ENCODE measurements at regions of chr4 and their contacts with region 1.

Region 1: DNA sequence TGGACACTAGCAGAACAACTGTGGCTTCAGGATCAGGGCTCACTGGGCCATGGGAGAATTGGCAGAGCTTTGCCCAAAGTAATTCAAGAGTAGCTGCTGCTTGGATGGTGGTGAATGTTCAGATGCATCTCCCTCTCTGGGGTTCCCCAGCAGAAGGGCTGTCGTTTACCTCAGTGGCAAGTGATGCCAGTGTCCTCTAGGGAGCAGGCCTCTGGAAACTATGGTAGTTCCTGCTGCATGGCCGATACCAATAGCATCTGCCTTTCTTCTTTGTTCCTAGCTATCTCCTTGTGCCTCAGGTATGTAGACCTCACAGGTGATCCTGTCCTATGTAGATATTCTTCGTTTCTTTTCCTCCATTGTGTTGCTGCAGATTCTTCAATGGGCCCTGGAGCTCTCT is 26.4 kb downstream of the HMGB2 start:
- DNase-seq: no peak
- H3K4me3 ChIP-seq: no peak overlapping the region
- H3K27ac ChIP-seq: no peak overlapping the region
- H3K4me1 ChIP-seq: no peaks in the 10 kb centered on the region
- H3K27me3 ChIP-seq: no peaks in the 10 kb centered on the region

Region 2: DNA sequence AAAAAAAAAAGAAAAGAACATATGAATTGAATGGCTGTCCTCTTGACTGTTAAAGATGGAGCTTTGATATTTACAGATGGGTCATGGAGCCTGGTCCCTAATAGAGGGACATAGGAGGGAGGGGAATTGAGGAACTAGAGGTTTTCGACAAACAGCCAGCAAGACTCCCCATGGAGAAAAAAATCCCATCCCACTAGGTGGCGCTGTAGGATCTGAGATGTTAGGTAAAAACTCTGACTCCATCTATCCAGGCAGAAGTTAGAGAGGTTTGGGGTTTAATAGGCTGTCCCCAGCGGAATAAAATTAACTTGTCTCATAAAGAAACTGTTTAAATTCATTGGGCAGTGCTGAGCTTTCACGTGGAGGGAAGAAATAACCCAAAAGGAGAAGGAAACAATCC is 19.5 kb before region 1 on chr4:
- CTCF ChIA-PET with region 1: interaction called, 15 read pairs
- POLR2A ChIA-PET with region 1: no interaction called
- DNase-seq: peak; percentile 65 to 83 (median 81)
- H3K4me3 ChIP-seq: peak overlapping the region in 2 of 7 experiments; percentile 21 to 63
- H3K27ac ChIP-seq: peak overlapping the region; percentile 73 to 89
- H3K4me1 ChIP-seq: peaks cover 0 to 5% (median 0%) of the 10 kb centered on the region in 4 experiments
- H3K27me3 ChIP-seq: no peaks in the 10 kb centered on the region